ENCODE measurements at regions of chr12 and their contacts with region 1.

Region 1: DNA sequence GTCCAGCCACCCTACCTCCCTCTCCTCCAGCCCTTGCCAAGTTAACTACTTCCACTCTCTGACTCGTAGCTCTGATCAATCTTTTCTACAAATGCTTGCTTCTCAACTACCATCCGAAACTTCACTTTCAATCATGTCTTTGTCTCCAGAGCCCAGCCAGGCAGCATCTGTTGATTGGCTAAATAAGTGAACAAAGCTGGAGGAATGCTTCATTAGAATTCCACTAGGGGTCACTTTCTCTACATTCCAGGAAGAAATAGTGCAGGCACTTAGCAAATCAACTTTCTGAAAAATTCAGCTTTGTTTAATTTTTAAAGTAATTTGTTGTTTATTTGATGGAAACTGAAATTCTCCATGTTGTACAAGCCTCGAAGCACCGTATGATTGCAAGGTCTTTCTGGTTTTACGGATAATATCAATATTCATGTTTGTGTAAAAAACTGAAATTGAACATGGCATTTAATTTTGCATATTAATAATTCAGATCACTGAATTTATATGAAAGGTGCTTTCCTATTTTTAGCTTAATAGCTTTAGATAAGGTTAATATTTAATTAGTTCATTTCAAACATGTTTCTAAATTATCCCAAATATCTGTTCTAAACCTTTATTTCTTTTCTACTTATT is 32.4 kb upstream of the HELB start:
- DNase-seq: peak in 1 of 2 donors; percentile 68
- ATAC-seq: peak in 2 of 3 donors; percentile 50 to 65
- H3K4me3 ChIP-seq: no peak overlapping the region
- H3K4me3 Mint-ChIP-seq: no peak overlapping the region
- H3K27ac ChIP-seq: no peak overlapping the region
- H3K27ac Mint-ChIP-seq: no peak overlapping the region
- H3K4me1 ChIP-seq: no peaks in the 10 kb centered on the region
- H3K4me1 Mint-ChIP-seq: no peaks in the 10 kb centered on the region
- H3K27me3 ChIP-seq: no peaks in the 10 kb centered on the region
- H3K27me3 Mint-ChIP-seq: no peaks in the 10 kb centered on the region
- CTCF ChIP-seq: peak; percentile 62

Region 2: GRCh38 chr12:66345212-66345611 is 75.3 kb after region 1 on chr12:
- intact Hi-C with region 1: no loop called
- DNase-seq: no peak
- ATAC-seq: no peak
- H3K4me3 ChIP-seq: no peak overlapping the region
- H3K4me3 Mint-ChIP-seq: no peak overlapping the region
- H3K27ac ChIP-seq: no peak overlapping the region
- H3K27ac Mint-ChIP-seq: no peak overlapping the region
- H3K4me1 ChIP-seq: no peaks in the 10 kb centered on the region
- H3K4me1 Mint-ChIP-seq: peaks cover 13 to 14% of the 10 kb centered on the region in 2 donors
- H3K27me3 ChIP-seq: no peaks in the 10 kb centered on the region
- H3K27me3 Mint-ChIP-seq: no peaks in the 10 kb centered on the region
- CTCF ChIP-seq: no peak

Region 3: GRCh38 chr12:66409195-66409871 is 139.5 kb after region 1 on chr12:
- intact Hi-C with region 1: loop called (anchors 1 kb)
- DNase-seq: peak in 1 of 2 donors; percentile 74
- ATAC-seq: peak; percentile 46 to 58 (median 53)
- H3K4me3 ChIP-seq: no peak overlapping the region
- H3K4me3 Mint-ChIP-seq: no peak overlapping the region
- H3K27ac ChIP-seq: no peak overlapping the region
- H3K27ac Mint-ChIP-seq: no peak overlapping the region
- H3K4me1 ChIP-seq: no peaks in the 10 kb centered on the region
- H3K4me1 Mint-ChIP-seq: no peaks in the 10 kb centered on the region
- H3K27me3 ChIP-seq: no peaks in the 10 kb centered on the region
- H3K27me3 Mint-ChIP-seq: peaks cover 17 to 25% of the 10 kb centered on the region in 2 donors
- CTCF ChIP-seq: peak; percentile 70

Region 4: DNA sequence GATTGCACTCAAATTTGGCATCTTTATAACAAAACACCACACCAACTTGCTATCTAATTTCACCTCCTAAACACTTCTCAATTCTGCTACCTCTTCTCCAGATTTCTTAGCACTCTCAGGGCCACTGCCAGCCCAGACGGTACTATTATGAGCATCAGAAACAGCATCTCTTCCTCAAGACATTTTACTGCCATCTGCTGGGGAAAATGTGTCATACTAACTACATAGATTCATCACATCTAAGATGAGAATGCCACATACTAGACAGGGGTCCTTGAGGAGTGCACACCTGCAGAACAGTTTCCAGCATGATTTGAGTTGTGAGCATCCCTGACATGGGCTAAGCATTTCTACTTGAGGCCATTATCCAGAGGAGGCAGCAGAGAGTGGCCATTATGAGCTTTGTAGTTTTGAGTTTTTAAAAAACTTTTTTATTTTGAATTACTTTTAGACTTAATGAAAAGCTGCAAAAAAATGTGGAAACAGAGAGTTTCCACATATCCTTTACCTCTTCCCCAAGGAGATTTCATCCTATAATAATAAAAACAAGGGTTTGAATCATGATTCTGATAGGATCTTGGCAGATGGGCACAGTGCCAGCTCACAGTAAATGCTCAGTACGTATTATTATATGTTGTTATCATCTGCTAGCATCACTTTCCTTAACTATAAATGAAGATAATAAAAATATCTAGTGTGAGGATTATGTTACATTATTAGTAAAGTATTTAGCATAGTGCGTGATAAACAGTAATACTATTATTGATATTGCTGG is 424.2 kb after region 1 on chr12:
- intact Hi-C with region 1: loop called (anchors 2 kb)
- DNase-seq: peak in 1 of 2 donors; percentile 77
- ATAC-seq: peak; percentile 73 to 86 (median 75)
- H3K4me3 ChIP-seq: no peak overlapping the region
- H3K4me3 Mint-ChIP-seq: no peak overlapping the region
- H3K27ac ChIP-seq: no peak overlapping the region
- H3K27ac Mint-ChIP-seq: no peak overlapping the region
- H3K4me1 ChIP-seq: peaks cover 3% of the 10 kb centered on the region
- H3K4me1 Mint-ChIP-seq: peaks cover 14 to 16% of the 10 kb centered on the region in 2 donors
- H3K27me3 ChIP-seq: no peaks in the 10 kb centered on the region
- H3K27me3 Mint-ChIP-seq: peaks cover under 1 to 8% of the 10 kb centered on the region in 2 donors
- CTCF ChIP-seq: peak; percentile 74

Region 5: DNA sequence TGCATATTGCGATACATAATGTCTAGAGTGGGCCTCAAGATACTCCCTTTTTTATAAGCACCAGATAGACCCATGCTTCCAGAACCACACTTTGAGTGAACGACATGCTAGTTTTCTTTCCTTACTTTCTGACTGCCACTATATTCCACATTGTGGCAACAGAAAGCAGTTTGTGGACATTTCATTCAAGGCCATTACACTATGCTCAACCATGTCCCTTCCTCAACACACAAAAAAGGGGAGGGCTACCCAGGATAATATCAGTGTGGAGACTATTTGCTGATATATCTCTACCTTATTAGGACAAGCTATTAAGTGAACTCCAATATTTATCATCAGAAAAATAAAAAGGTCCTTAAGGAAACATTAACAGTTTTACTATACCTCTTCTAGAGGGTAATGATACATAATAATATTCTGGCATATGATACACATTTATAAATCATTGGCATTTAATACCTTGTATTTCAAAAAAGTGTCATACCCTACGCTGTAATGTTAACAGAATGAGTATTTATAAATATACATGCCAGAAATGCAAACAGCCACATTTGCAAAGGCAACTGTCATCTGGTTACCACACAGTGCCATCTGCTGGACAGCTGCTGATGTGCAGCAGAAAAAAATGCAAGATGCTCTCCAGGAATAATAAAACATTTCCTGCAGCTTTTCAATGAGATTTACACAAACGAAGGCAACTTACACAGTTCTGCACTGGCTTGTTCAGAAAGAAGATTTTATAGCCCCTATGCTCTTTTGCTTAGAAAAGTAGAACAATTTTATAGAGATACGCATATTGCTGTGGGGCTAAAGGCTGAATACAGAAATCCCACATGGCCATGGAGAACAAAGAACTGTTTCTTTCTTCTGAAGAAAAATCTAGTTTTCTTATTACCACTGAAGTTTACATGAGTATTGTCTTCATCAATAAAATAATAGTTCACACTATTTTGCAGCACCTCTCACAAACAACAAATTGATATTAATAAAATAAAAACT is 591.2 kb after region 1 on chr12:
- intact Hi-C with region 1: loop called (anchors 2 kb)
- DNase-seq: peak; percentile 55 to 83
- ATAC-seq: peak; percentile 68 to 79 (median 75)
- H3K4me3 ChIP-seq: no peak overlapping the region
- H3K4me3 Mint-ChIP-seq: no peak overlapping the region
- H3K27ac ChIP-seq: no peak overlapping the region
- H3K27ac Mint-ChIP-seq: no peak overlapping the region
- H3K4me1 ChIP-seq: peaks cover 5% of the 10 kb centered on the region
- H3K4me1 Mint-ChIP-seq: peaks cover 13 to 26% of the 10 kb centered on the region in 2 donors
- H3K27me3 ChIP-seq: no peaks in the 10 kb centered on the region
- H3K27me3 Mint-ChIP-seq: peaks cover 9 to 28% of the 10 kb centered on the region in 2 donors
- CTCF ChIP-seq: peak; percentile 98

Measured in natural killer cell (primary cell).